ENCODE measurements at regions of chr10 and their contacts with region 1.

Region 1: GRCh38 chr10:48363617-48364355 is 57.3 kb downstream of the MAPK8 start:
- DNase-seq: peak in 31 of 42 donors; percentile 2 to 75 (median 48)

Region 2: DNA sequence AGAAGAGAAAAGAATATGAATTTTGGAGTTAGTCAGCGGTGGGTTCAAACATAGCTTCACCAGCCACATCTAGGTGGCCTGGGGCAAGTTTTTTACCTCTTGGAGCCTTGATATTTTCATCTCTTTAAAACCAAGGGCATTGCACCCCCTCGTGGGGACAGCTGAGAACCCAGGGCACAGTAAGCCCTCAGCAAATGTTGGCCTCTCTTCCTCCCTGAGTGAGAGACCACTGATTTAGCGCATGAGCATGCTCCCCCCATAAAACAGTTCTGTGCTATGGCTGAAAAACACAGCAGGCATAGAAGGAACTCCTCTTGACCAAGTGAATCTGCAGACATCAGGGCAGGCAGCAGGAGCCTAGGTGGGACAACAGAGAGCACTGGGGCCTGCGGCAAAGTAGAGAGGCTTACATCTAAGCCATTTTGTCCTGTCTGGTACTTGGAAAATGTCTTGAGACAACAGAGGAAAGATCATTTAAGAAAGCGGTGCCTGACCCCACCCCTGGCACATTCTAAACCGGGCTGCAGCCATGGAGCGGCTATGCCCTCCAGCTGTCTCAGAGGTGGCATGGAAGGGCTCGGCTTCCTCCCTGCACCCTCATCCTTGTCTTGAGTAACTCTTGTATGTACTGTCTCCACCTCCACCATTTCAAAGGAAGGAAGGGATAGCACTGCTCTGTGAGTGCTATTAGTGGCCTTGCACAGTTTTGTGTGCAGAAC is 146.3 kb after region 1 on chr10:
- intact Hi-C with region 1: loop called (anchors 5 kb)
- DNase-seq: peak in 4 of 42 donors; percentile 16 to 47 (median 37)